MCF 10A (cell line): ENCODE measurements at regions of chr4 and their contacts with region 1.

Region 1: DNA sequence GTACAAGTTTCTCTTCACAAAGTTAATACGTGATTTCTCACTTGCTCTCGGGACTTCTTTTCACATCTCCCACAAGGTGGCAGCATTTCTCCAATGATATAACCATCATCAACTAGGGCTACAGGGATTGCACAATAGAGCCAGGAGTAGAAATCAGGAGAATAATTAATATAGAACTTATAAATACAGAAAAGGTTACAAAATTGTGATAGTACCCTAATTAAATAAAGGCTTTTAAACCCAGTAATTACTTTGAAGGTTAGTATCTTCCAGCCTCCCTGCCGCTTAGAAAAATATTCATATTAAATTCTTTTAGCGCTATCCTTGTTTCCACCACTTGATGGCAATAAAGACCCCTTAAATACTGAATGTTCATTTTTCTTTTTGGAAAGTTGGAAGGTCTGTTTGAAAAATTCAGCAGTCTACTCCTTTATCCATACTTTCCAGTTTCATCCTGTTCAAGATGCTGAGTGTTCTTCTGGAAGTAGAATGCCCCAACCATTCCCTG is 65.8 kb downstream of the RASGEF1B start:
- DNase-seq: peak; percentile 92
- H3K4me3 Mint-ChIP-seq: no peak overlapping the region
- H3K27ac Mint-ChIP-seq: no peak overlapping the region
- H3K4me1 Mint-ChIP-seq: peaks cover 11% of the 10 kb centered on the region
- H3K27me3 Mint-ChIP-seq: peaks cover 11% of the 10 kb centered on the region
- CTCF ChIP-seq: peak; percentile 68

Region 2: DNA sequence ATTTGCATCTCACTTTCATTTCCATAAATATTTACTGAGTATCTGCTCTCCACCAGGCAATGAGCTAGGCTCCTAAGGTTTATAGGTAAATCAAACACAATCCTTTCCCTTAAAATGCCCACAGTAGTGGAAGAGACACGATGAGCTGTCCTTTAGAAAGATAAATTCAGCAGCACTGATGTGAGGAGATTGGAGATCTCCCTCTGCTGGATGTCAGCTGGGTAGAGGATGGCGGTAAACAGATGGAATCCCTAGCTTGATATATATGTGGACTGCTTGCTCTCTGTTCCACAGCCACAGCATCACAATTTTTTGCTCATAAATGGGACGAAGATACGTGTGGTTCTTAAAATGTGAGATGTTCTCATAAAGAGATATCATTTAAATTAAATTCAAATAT is 282.1 kb after region 1 on chr4:
- CTCF ChIA-PET with region 1: interaction called, 3 read pairs
- POLR2A ChIA-PET with region 1: no interaction called
- intact Hi-C with region 1: loop called (anchors 1 kb)
- DNase-seq: peak; percentile 7
- H3K4me3 Mint-ChIP-seq: no peak overlapping the region
- H3K27ac Mint-ChIP-seq: no peak overlapping the region
- H3K4me1 Mint-ChIP-seq: no peaks in the 10 kb centered on the region
- H3K27me3 Mint-ChIP-seq: no peaks in the 10 kb centered on the region
- CTCF ChIP-seq: no peak

Region 3: GRCh38 chr4:81844717-81845116 is 438.8 kb after region 1 on chr4:
- CTCF ChIA-PET with region 1: interaction called, 16 read pairs
- POLR2A ChIA-PET with region 1: interaction called, 4 read pairs
- intact Hi-C with region 1: loop called (anchors 1 kb)
- DNase-seq: peak; percentile 85
- H3K4me3 Mint-ChIP-seq: no peak overlapping the region
- H3K27ac Mint-ChIP-seq: no peak overlapping the region
- H3K4me1 Mint-ChIP-seq: peaks cover 5% of the 10 kb centered on the region
- H3K27me3 Mint-ChIP-seq: no peaks in the 10 kb centered on the region
- CTCF ChIP-seq: peak; percentile 78

Region 4: DNA sequence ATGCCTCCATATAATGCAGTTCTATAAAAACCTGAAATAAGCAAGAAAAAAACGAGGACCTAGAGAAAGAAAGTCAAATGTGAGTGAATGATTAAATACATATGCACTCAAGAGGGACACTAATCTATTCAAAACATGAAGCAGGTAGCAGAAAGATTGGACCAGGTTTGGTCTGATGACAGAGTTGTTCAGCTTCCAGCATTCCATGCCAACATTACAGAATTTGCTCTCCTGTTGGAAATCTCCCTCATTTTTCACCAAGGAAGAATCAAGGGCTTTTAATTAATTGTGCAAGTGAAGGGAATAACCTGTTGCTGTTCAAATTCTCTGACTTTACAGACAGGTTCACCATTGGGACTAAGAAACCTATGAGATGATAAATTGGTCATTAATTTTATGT is 444.8 kb after region 1 on chr4:
- CTCF ChIA-PET with region 1: interaction called, 11 read pairs
- POLR2A ChIA-PET with region 1: interaction called, 4 read pairs
- intact Hi-C with region 1: no loop called
- DNase-seq: no peak
- H3K4me3 Mint-ChIP-seq: no peak overlapping the region
- H3K27ac Mint-ChIP-seq: no peak overlapping the region
- H3K4me1 Mint-ChIP-seq: no peaks in the 10 kb centered on the region
- H3K27me3 Mint-ChIP-seq: no peaks in the 10 kb centered on the region
- CTCF ChIP-seq: no peak

Region 5: GRCh38 chr4:81919238-81919637 is 513.3 kb after region 1 on chr4:
- CTCF ChIA-PET with region 1: no interaction called
- POLR2A ChIA-PET with region 1: no interaction called
- intact Hi-C with region 1: loop called (anchors 5 kb)
- DNase-seq: peak; percentile 38
- H3K4me3 Mint-ChIP-seq: no peak overlapping the region
- H3K27ac Mint-ChIP-seq: no peak overlapping the region
- H3K4me1 Mint-ChIP-seq: no peaks in the 10 kb centered on the region
- H3K27me3 Mint-ChIP-seq: no peaks in the 10 kb centered on the region
- CTCF ChIP-seq: peak; percentile 26

Region 6: DNA sequence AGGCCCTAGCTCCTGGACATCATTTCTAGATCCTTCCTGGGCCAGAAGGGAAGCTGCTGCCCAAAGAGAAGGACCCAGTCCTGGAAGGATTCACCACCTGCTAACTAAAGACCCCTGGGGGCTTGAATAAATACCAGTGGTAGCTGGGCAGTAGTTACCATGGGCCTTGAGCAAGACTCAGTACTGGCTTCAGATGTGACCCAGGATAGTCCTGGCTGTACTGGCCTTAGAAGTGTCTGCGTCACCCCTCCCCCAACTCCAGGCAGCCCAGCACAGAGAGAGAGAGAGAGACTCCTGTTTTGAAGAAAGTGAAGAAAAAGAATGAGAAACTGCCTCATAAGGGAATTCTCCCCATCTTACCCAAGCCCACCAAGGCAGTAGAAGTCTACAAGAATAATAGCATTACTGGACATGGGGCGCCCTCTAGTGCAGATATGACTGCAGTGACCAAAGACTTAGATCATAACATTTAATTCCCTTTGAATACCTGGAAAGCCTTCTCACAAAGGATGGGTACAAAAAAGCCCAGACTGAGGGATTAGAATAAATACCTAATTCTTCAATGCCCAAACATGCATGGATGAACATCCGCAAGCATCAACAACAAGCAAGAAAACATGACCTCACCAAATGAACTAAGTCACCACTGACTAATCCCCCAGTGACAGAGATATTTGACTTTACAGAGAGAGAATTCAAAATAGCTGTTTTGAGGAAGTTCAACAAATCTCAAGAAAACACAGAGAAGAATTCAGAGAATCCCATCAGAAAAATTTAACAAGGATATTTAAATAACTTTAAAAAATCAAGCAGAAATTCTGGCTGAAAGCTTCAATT is 796.1 kb after region 1 on chr4:
- CTCF ChIA-PET with region 1: interaction called, 6 read pairs
- POLR2A ChIA-PET with region 1: no interaction called
- intact Hi-C with region 1: loop called (anchors 1 kb)
- DNase-seq: peak; percentile 69
- H3K4me3 Mint-ChIP-seq: no peak overlapping the region
- H3K27ac Mint-ChIP-seq: no peak overlapping the region
- H3K4me1 Mint-ChIP-seq: peaks cover 5% of the 10 kb centered on the region
- H3K27me3 Mint-ChIP-seq: no peaks in the 10 kb centered on the region
- CTCF ChIP-seq: peak; percentile 74

Region 7: GRCh38 chr4:82360298-82361177 is 954.6 kb after region 1 on chr4:
- CTCF ChIA-PET with region 1: no interaction called
- POLR2A ChIA-PET with region 1: no interaction called
- intact Hi-C with region 1: loop called (anchors 1 kb)
- DNase-seq: peak; percentile 49
- H3K4me3 Mint-ChIP-seq: no peak overlapping the region
- H3K27ac Mint-ChIP-seq: no peak overlapping the region
- H3K4me1 Mint-ChIP-seq: peaks cover 32% of the 10 kb centered on the region
- H3K27me3 Mint-ChIP-seq: no peaks in the 10 kb centered on the region
- CTCF ChIP-seq: peak; percentile 48